PC-3 (cell line): ENCODE measurements at regions of chr5 and their contacts with region 1.

Region 1: DNA sequence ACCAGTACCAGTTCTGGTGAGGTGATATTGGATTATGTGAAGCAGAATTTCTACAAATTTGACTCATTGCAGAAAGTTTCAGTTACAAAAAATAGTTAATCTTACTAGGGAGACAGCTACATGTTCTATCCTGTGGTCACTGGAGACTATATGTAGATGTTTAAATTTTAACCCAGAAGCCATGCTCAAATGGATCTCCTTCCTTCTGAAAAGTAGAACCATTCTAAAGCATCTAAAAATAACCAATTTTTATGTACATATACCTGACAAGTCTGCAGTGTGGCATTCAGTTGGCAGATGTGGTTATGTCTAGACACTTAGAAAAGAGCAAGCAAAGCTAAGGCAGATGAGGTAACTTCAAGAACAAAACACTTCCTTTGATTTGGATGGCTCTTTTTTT is 65.5 kb upstream of the POU4F3 start:
- DNase-seq: no peak
- ATAC-seq: no peak
- H3K4me3 ChIP-seq: no peak overlapping the region
- H3K27ac ChIP-seq: no peak overlapping the region
- H3K4me1 ChIP-seq: no peaks in the 10 kb centered on the region
- H3K27me3 ChIP-seq: no peaks in the 10 kb centered on the region
- CTCF ChIP-seq: no peak

Region 2: DNA sequence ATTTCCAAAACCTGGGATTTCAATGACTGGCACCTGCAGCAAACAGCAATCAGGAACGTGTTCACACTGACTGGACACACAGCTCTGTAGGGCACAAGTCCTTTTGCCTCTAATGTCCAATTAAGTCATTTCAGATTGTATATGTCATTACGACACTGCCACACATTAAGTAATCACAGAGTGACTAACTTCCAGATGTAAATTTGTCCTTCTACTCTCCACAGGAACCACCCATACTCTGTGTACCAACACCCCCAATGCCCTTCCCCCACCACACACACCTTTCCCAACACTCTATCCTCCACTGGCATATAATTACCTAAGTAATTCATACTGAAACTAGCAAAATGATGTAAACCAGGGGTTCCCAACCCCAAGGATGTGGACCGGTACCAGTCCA is 121.1 kb before region 1 on chr5:
- CTCF ChIA-PET with region 1: no interaction called
- POLR2A ChIA-PET with region 1: no interaction called
- intact Hi-C with region 1: loop called (anchors 10 kb)
- DNase-seq: no peak
- ATAC-seq: no peak
- H3K4me3 ChIP-seq: no peak overlapping the region
- H3K27ac ChIP-seq: no peak overlapping the region
- H3K4me1 ChIP-seq: no peaks in the 10 kb centered on the region
- H3K27me3 ChIP-seq: no peaks in the 10 kb centered on the region
- CTCF ChIP-seq: no peak